ENCODE measurements at regions of chr3 and their contacts with region 1.

Region 1: GRCh38 chr3:15051531-15051930 is 13.6 kb downstream of the MRPS25 start:
- DNase-seq: no peak
- ATAC-seq: peak; percentile 59 to 63
- H3K4me3 ChIP-seq: no peak overlapping the region
- H3K27ac ChIP-seq: no peak overlapping the region
- H3K4me1 ChIP-seq: no peaks in the 10 kb centered on the region
- H3K27me3 ChIP-seq: no peaks in the 10 kb centered on the region

Region 2: GRCh38 chr3:14178247-14179113 is 873.1 kb before region 1 on chr3 and contains the starts of genes LSM3 and XPC:
- intact Hi-C with region 1: loop called in 1 of 4 experiments (anchors 10 kb)
- DNase-seq: peak; percentile 97 to 98 (median 98)
- ATAC-seq: peak; percentile 99 to 100
- H3K4me3 ChIP-seq: peak within 1 kb of the TSS; percentile 91
- H3K27ac ChIP-seq: peak within 1 kb of the TSS; percentile 96
- H3K4me1 ChIP-seq: peaks cover 2% of the 10 kb centered on the region
- H3K27me3 ChIP-seq: no peaks in the 10 kb centered on the region
- total RNA-seq, gene LSM3: 13.5 to 16.5 (median 15.2) TPM
- total RNA-seq, gene XPC: 10.7 to 16.1 (median 14.4) TPM

Region 3: GRCh38 chr3:14640157-14640562 is 411.4 kb before region 1 on chr3:
- intact Hi-C with region 1: no loop called
- DNase-seq: no peak
- ATAC-seq: no peak
- H3K4me3 ChIP-seq: no peak overlapping the region
- H3K27ac ChIP-seq: no peak overlapping the region
- H3K4me1 ChIP-seq: no peaks in the 10 kb centered on the region
- H3K27me3 ChIP-seq: no peaks in the 10 kb centered on the region